ENCODE measurements at regions of chr4 and their contacts with region 1.

Region 1: GRCh38 chr4:86908251-86908657 is 16.0 kb upstream of the C4orf36 start:
- DNase-seq: no peak
- H3K4me3 ChIP-seq: no peak overlapping the region
- H3K27me3 ChIP-seq: no peaks in the 10 kb centered on the region
- CTCF ChIP-seq: no peak

Region 2: DNA sequence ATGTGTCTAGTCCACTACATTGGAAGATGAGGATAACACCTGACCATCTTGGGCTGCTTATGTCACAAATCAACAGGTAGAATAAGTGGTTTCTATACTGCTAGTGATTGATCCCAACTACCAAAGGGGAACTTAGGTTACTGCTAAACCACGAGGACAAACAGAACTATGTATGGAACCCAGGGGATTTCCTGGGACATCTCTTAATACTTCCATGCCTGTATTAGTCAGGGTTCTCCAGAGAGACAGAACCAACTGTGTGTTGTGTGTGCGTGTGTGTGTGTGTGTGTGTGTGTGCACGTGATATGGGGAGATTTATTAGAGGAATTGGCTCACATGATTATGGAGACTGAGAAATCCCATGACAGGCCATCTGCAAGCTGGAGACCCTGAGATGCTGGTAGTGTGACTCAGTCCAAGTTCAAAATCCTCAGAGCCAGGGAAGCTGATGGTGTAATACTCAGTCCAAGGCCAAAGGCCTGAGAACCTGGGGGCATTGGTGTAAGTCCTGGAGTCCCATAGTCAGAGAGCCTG is 10.4 kb after region 1 on chr4:
- CTCF ChIA-PET with region 1: interaction called, 25 read pairs
- POLR2A ChIA-PET with region 1: no interaction called
- DNase-seq: no peak
- H3K4me3 ChIP-seq: no peak overlapping the region
- H3K27me3 ChIP-seq: no peaks in the 10 kb centered on the region
- CTCF ChIP-seq: no peak

Region 3: GRCh38 chr4:87433342-87433741 is 525.1 kb after region 1 on chr4:
- CTCF ChIA-PET with region 1: no interaction called
- POLR2A ChIA-PET with region 1: no interaction called
- DNase-seq: no peak
- H3K4me3 ChIP-seq: no peak overlapping the region
- H3K27me3 ChIP-seq: no peaks in the 10 kb centered on the region
- CTCF ChIP-seq: no peak